ENCODE measurements at regions of chr6 and their contacts with region 1.

Region 1: DNA sequence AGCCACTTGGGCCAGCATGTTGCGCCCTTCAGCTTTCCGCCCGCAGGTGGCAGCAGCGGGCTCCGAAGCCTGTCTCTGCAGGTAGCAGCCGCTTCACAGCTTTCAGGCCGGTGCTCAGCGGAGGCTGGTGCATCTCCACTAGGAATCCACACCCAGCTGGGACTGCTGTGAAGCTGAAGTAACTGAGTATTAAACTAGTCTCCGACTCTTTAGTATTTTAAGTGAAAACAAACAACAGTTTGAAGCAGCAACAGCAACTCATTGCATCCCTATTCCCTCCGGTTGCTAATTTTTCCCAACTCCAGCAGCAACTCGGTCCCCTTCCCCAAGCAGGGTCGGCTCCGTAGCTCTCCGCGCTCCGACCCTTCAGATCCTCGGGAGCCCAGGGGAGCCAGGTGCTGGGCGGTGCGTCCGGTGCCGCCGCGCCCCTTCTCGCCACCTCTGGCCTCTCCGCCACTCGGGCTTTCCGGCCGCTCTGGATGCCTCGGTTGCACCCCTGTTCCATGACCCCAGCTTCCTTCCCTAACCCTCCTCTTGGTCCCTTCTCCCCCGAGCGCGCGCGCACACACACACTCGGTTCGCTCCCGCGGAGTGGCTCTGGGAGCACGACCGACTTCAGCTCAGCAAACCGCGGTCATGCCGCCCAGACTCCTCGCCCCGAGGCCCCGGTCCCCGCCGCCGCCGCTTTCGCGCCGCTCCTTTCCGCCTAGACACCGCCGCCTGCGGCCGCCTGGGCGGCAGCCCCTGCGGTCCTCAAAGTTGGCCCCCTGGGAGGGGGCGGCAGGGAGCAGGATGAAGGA is 768 bp upstream of the NKAIN2 start:
- DNase-seq: peak; percentile 49 to 77
- ATAC-seq: peak; percentile 96

Region 2: GRCh38 chr6:123869334-123869733 is 66.4 kb after region 1 on chr6:
- intact Hi-C with region 1: no loop called
- DNase-seq: no peak
- ATAC-seq: no peak

Region 3: GRCh38 chr6:124854338-124854922 is 1051.5 kb after region 1 on chr6:
- intact Hi-C with region 1: loop called in 1 of 2 experiments (anchors 10 kb)
- DNase-seq: no peak
- ATAC-seq: no peak

Measured in left colon (tissue), 2 donors.